BJ (cell line): ENCODE measurements at regions of chr1 and their contacts with region 1.

Region 1: DNA sequence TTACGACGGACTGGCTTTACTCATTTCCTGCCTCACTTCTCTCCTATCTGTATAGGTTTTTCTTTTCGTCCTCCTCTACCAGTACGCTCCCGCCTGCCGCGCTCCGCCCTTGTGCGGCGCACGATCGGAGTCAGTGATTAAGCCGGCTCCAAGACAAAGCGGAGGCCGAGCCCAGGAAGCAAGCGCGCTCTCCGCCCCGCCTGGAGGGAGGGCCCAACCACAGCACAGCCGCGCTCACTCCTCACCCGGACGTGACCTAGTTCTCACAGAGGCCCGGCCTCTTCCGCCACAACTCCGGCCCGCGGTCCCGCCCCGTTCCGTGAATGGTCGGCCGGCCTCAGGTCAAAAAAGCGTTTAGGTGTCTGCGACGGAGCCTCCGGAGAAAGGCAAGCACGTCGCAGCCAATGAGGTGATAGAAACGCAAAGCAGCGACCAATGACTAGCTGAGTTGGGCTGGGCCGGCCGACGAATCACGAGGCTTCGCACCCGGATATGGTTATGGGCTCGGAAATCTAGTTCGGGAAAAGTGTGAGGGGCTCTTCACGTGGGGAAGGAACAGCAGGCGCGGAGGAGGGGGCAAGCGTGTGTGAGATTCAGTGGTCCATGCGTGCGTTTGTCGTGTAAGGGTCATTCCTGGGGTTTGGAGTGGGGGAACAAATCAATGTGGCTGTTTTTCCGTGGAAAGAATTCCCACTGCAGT is at the start of gene METTL13:
- DNase-seq: peak; percentile 97
- H3K4me3 ChIP-seq: peak within 1 kb of the TSS; percentile 75
- H3K27me3 ChIP-seq: no peaks in the 10 kb centered on the region
- CTCF ChIP-seq: 0 out of 2 replicates have a peak, but pooled peaks have one; percentile 11
- polyA plus RNA-seq, gene METTL13: 25.9 and 30.1 TPM in 2 replicates

Region 2: GRCh38 chr1:171769171-171769570 is 12.2 kb before region 1 on chr1:
- CTCF ChIA-PET with region 1: interaction called, 3 read pairs
- POLR2A ChIA-PET with region 1: interaction called, 20 read pairs
- DNase-seq: no peak
- H3K4me3 ChIP-seq: no peak overlapping the region
- H3K27me3 ChIP-seq: no peaks in the 10 kb centered on the region
- CTCF ChIP-seq: no peak